ENCODE measurements at regions of chr19 and their contacts with region 1.

Region 1: GRCh38 chr19:4909897-4910593 is 744 bp downstream of the UHRF1 start:
- DNase-seq: peak; percentile 92
- H3K4me3 ChIP-seq: peak overlapping the region; percentile 59 to 60
- H3K27ac ChIP-seq: no peak overlapping the region
- H3K4me1 ChIP-seq: peaks cover 0 to 30% (median 28%) of the 10 kb centered on the region in 4 donors
- H3K27me3 ChIP-seq: peaks cover 0 to 20% of the 10 kb centered on the region in 2 donors
- CTCF ChIP-seq: no peak

Region 2: DNA sequence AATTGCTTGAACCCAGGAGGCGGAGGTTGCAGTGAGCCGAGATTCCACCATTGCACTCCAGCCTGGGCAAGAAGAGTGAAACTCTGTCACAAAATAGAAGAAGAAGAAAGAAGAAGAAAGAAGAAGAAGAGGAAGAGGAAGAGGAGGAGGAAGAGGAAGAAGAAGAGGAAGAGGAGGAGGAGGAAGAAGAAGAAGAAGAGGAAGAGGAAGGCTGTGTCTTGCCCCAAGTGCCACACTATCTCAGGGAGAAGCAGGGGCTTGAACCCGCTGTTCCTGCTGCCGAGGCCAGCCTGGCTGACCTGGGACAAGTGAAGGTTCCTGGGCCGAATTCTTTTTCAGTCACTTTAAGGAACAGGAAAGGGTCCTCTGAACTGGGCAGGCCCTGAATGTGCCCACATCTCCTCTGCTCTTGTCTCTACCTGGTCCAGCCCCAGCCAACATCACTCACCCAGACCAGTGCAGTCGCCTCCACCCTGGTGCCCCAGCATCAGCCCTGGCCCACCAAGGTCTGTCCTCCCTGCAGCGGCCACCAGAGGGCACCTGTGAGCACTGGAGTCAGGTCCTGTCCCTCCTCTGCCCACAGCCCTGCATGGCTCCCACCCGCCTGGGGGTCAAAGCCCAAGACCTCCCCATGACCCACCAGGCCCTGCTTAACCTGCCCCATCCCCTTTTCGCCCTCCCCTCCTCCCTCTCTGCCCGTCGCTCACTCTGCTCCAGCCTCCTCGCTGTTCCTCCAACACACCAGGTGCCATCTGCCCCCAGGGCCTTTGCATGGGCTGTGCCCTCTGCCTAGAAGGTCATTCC is 98.5 kb before region 1 on chr19:
- intact Hi-C with region 1: loop called (anchors 5 kb)
- DNase-seq: peak; percentile 81 to 85
- H3K4me3 ChIP-seq: no peak overlapping the region
- H3K27ac ChIP-seq: peak overlapping the region; percentile 83 to 84
- H3K4me1 ChIP-seq: peaks cover 0 to 50% (median 30%) of the 10 kb centered on the region in 4 donors
- H3K27me3 ChIP-seq: no peaks in the 10 kb centered on the region
- CTCF ChIP-seq: peak; percentile 78 to 88

Region 3: DNA sequence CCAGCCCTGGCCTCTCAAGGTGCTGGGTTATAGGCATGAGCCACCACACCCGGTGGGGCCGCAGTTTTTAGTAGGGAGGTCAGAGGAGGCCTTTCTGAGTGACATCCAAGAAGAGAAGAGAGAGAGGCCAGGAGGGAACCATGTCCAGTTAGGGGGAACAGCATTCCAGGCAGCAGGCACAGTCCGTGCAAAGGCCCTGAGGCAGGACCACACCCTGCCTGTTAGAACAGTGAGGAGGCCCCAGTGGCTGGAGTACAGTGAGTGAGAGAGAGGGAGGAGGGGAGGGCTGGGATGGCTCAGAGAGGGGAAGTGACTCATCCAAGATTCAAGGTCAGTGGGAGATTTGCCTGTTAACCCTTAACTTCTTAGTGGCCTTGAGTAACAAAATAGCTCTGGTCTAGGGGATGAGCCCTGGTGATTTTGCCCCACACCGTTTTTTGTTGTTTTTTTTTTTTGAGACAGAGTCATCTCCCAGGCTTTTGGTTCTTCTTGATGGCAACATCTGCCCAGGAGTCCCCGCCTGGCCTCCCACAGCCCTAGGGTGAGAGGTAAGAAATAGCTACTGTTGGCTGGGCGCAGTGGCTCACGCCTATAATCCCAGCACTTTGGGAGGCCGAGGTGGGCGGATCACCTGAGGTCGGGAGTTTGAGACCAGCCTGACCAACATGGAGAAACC is 39.9 kb before region 1 on chr19:
- intact Hi-C with region 1: loop called (anchors 2 kb)
- DNase-seq: no peak
- H3K4me3 ChIP-seq: no peak overlapping the region
- H3K27ac ChIP-seq: no peak overlapping the region
- H3K4me1 ChIP-seq: peaks cover 0 to 16% (median 12%) of the 10 kb centered on the region in 4 donors
- H3K27me3 ChIP-seq: no peaks in the 10 kb centered on the region
- CTCF ChIP-seq: no peak